ENCODE measurements at regions of chr16 and their contacts with region 1.

Region 1: DNA sequence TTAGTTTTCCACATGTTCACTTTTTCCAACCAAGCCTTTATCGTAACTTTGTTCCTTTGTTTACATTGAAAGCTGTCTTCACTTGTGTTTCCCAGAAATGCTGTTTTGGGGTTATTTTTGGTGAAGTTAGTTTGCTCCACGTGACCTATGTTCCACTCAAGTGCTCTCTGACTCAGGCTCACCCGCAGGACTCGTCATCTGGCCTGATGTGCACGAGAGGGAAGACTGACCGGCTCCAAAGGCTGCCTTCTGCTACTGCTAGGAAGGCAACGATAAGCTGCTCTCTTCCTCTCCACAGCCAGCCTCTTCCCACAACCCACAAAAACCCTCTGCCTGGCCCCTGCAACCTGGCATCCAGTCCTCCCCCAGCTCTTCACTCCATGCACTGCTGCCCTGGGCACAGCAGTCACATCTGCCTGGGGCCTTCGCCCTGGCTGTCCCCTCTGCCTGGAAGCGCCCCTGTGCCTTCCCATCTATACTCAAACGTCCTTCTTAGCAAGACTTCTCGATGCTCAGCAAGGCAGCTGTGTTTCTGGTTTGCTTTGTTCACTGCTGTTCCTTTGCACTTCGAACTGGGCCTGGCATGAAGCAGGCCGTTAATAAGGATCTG is 28.0 kb downstream of the ZCCHC14 start:
- DNase-seq: no peak
- H3K4me3 Mint-ChIP-seq: peak overlapping the region; percentile 66
- H3K27ac Mint-ChIP-seq: peak overlapping the region; percentile 56
- H3K4me1 Mint-ChIP-seq: peaks cover 28% of the 10 kb centered on the region
- H3K27me3 Mint-ChIP-seq: no peaks in the 10 kb centered on the region

Region 2: GRCh38 chr16:87487361-87488001 is 22.7 kb after region 1 on chr16:
- intact Hi-C with region 1: loop called (anchors 2 kb)
- DNase-seq: no peak
- H3K4me3 Mint-ChIP-seq: no peak overlapping the region
- H3K27ac Mint-ChIP-seq: no peak overlapping the region
- H3K4me1 Mint-ChIP-seq: peaks cover 65% of the 10 kb centered on the region
- H3K27me3 Mint-ChIP-seq: peaks cover 5% of the 10 kb centered on the region

Region 3: DNA sequence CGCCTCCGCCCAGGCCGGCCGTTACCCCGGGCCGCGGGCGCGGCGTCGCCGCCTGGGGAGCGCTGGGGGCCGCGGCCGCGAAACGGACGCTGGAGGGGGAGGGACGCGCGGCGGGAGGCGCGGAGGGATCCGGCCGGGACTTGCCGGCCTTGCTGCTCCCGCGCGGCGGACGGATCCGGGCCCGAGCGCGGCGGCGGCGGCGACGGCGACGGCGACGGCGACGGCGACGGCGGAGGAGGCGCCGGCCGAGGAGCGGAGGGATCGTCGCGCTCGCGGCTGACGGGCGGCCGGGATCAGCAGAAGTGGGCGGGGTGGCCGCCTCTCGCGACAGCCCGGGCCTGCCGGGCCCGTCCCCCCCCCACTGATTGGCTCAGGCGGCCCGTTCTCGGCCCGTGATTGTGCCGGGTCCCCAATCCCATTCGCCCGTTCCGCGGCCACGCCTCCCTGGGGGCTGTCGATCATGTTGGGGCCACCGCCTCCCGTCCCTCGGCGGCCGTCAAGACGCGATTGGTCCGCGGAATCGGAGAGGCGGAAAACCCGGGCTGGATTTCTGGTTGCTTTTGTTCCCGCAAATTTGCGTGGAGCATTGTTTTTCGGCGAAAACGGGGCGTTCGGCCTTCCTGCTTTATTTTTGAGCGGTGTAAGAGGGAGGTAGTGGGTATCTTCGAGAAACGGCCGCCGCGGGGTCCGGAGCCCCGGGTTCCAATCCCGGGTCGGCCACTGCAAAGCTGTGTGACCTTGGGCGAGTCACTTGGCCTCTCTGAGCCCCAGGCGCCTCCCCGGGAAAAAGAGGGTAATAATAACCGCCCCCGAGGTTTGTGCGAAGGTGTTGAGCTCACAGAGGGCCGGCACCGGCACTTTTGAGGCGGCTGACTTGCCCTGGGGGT is 28.2 kb after region 1 on chr16 and contains the start of gene ZCCHC14:
- intact Hi-C with region 1: loop called (anchors 2 kb)
- DNase-seq: peak; percentile 98
- H3K4me3 Mint-ChIP-seq: peak within 1 kb of the TSS; percentile 82
- H3K27ac Mint-ChIP-seq: peak within 1 kb of the TSS; percentile 68
- H3K4me1 Mint-ChIP-seq: peaks cover 41% of the 10 kb centered on the region
- H3K27me3 Mint-ChIP-seq: peaks cover 24% of the 10 kb centered on the region
- total RNA-seq, gene ZCCHC14: 7.4 and 8.0 TPM in 2 replicates

Region 4: DNA sequence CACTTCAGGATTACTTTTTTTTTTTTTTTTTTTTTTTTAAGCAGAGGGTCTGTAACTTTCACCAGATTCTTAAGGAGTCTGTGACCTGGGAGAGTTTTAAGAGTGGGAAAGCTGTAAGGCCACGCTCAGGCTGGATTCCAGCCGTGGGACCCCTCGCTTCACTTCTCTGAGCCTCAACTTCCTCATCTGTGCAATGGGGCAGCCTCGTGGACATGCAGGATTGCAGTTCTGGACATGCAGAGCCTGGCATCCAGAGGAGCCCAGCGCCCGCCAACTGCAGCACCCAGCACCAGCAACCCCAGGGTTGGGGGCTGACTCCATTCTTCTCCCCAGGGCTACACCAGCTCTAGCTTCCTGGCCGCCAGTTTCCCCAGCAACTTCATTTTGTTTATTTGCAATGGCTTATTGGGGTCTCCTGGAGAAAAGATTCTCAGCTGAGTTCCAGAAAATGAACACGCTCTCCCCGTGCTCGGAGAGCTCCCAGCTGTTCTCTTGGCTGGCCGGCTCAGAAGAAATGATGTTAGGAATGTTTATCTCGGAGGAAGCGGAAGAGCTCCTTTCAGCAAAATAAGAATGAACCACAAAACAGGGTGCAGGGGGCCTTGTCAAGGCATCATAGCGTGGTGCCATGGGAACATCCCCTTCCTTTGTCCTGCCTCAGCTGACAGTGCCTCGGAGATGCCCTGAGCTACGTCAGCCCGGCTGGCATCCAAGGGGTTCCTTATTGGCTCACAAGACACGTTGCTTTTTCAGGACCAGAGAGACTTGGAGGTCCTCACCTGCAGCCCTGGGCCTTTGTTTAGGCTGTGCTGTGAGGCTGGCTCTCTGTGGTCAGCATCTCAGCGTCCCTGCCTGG is 50.9 kb after region 1 on chr16:
- intact Hi-C with region 1: no loop called
- DNase-seq: no peak
- H3K4me3 Mint-ChIP-seq: no peak overlapping the region
- H3K27ac Mint-ChIP-seq: no peak overlapping the region
- H3K4me1 Mint-ChIP-seq: no peaks in the 10 kb centered on the region
- H3K27me3 Mint-ChIP-seq: peaks cover 9% of the 10 kb centered on the region